Transverse colon (tissue), 4 donors: ENCODE measurements at regions of chr17 and their contacts with region 1.

Region 1: DNA sequence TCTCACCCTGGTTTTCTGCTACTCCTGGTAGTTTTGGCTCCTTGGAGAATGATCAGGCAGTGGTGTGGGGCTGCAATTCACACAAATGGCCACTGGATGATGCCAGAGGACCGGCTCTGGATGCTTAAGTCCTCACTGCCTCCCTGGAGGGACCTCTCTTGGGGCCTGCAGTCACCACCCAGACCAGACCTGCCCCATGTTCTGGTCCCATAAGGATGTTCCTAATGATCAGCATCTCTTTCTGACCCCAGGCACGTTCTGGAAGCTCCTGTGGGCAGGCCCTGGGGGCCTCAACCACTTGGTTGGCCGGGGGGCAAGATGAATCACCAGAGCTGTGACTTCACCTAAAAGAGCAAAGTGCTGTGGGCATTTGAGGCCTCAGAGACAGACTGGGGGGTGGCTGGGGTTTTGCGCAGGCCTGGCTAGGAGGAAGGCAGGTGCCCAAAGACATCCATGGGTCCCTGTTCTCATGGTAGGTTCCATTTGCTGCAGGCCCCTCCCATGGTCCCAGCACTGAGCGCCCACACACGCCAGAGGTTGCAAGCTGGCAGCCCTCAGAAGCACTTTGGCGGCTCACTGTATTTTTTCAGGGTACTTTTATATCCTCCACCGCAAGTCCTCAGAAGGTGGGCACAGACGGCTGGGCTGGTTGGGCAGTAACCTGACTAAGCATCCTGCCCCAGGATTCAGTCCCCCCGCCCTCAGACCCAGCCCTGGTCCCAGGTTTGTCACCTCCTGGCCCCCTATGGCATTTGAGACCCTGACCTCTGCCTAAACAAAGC is 53.2 kb downstream of the NT5M start:
- DNase-seq: peak; percentile 77
- H3K4me3 ChIP-seq: no peak overlapping the region
- H3K27ac ChIP-seq: no peak overlapping the region
- H3K4me1 ChIP-seq: peaks cover 0 to 4% (median 0%) of the 10 kb centered on the region in 4 donors
- H3K27me3 ChIP-seq: no peaks in the 10 kb centered on the region
- CTCF ChIP-seq: peak; percentile 99 to 100 (median 99)
- EP300 ChIP-seq: no peak
- POLR2A ChIP-seq: no peak

Region 2: GRCh38 chr17:17568749-17569195 is 212.4 kb after region 1 on chr17:
- in situ Hi-C with region 1: loop called in 1 of 4 experiments (anchors 10 kb)
- intact Hi-C with region 1: no loop called
- DNase-seq: peak; percentile 80
- H3K4me3 ChIP-seq: no peak overlapping the region
- H3K27ac ChIP-seq: no peak overlapping the region
- H3K4me1 ChIP-seq: peaks cover 6 to 30% (median 14%) of the 10 kb centered on the region in 4 donors
- H3K27me3 ChIP-seq: no peaks in the 10 kb centered on the region
- CTCF ChIP-seq: peak; percentile 69 to 84 (median 75)
- EP300 ChIP-seq: no peak
- POLR2A ChIP-seq: no peak

Region 3: GRCh38 chr17:17641621-17642409 is 285.5 kb after region 1 on chr17:
- in situ Hi-C with region 1: loop called (anchors 5 to 10 kb)
- intact Hi-C with region 1: loop called (anchors 2 kb)
- DNase-seq: peak; percentile 82
- H3K4me3 ChIP-seq: no peak overlapping the region
- H3K27ac ChIP-seq: no peak overlapping the region
- H3K4me1 ChIP-seq: no peaks in the 10 kb centered on the region
- H3K27me3 ChIP-seq: no peaks in the 10 kb centered on the region
- CTCF ChIP-seq: peak; percentile 89 to 93 (median 92)
- EP300 ChIP-seq: no peak
- POLR2A ChIP-seq: no peak